Activated naive CD4-positive, alpha-beta T cell treated with anti-CD3 and anti-CD28 coated beads for 36 hours (primary cell): ENCODE measurements at regions of chr15 and their contacts with region 1.

Region 1: GRCh38 chr15:52558196-52558595 is 10.6 kb downstream of the ARPP19 start:
- DNase-seq: peak; percentile 82
- H3K4me3 Mint-ChIP-seq: peak overlapping the region; percentile 24
- H3K27ac Mint-ChIP-seq: peak overlapping the region; percentile 89
- H3K4me1 Mint-ChIP-seq: peaks cover 55% of the 10 kb centered on the region
- H3K27me3 Mint-ChIP-seq: no peaks in the 10 kb centered on the region

Region 2: DNA sequence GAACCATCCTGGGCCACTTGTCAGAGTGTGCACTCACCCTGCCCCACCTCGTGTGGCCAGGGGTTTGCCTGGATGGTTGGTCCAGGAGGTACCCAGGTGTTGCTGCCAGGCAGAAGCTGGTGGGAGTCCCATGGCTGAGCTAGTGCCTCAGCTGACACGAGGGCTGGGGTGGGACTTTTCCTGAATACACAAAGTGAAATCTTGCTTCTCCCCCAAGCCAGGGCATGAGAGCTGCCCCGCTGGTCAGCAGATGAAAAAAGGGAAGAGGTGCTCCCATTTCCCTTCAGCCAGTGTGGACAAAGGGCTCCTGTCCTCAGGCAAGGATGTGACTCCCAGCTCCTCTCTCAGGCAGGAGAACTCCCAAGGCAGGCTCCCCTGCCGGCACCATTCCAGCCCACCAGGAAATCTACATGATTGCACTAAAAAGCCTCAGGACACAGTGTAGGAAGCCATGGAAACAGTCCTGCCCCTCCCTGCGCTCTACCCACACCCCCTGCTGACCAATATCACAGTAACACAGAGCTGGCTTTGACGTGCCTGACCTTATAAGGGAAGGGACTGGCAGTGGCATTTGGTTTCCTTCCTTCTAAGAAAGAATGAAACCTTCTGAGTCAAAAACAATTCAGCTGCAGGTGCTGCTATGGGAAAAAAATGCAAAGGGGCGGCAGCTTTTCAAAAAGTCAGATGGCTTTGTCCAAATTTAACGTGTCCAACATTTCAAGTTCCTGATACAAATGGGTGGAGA is 296.5 kb before region 1 on chr15:
- CTCF ChIA-PET with region 1: interaction called, 4 read pairs
- intact Hi-C with region 1: loop called (anchors 2 kb)
- DNase-seq: peak; percentile 89
- H3K4me3 Mint-ChIP-seq: peak overlapping the region; percentile 13
- H3K27ac Mint-ChIP-seq: peak overlapping the region; percentile 74
- H3K4me1 Mint-ChIP-seq: peaks cover 34% of the 10 kb centered on the region
- H3K27me3 Mint-ChIP-seq: no peaks in the 10 kb centered on the region

Region 3: GRCh38 chr15:52481915-52482314 is 76.3 kb before region 1 on chr15:
- CTCF ChIA-PET with region 1: no interaction called
- intact Hi-C with region 1: loop called (anchors 2 kb)
- DNase-seq: peak; percentile 55
- H3K4me3 Mint-ChIP-seq: no peak overlapping the region
- H3K27ac Mint-ChIP-seq: no peak overlapping the region
- H3K4me1 Mint-ChIP-seq: peaks cover 47% of the 10 kb centered on the region
- H3K27me3 Mint-ChIP-seq: no peaks in the 10 kb centered on the region

Region 4: GRCh38 chr15:52528991-52529926 is 28.9 kb before region 1 on chr15:
- CTCF ChIA-PET with region 1: no interaction called
- intact Hi-C with region 1: loop called (anchors 1 kb)
- DNase-seq: peak; percentile 81
- H3K4me3 Mint-ChIP-seq: peak overlapping the region; percentile 74
- H3K27ac Mint-ChIP-seq: peak overlapping the region; percentile 47
- H3K4me1 Mint-ChIP-seq: peaks cover 13% of the 10 kb centered on the region
- H3K27me3 Mint-ChIP-seq: no peaks in the 10 kb centered on the region

Region 5: GRCh38 chr15:52658955-52659354 is 100.8 kb after region 1 on chr15:
- CTCF ChIA-PET with region 1: no interaction called
- intact Hi-C with region 1: loop called (anchors 1 kb)
- DNase-seq: peak; percentile 53
- H3K4me3 Mint-ChIP-seq: no peak overlapping the region
- H3K27ac Mint-ChIP-seq: no peak overlapping the region
- H3K4me1 Mint-ChIP-seq: peaks cover 24% of the 10 kb centered on the region
- H3K27me3 Mint-ChIP-seq: no peaks in the 10 kb centered on the region

Region 6: GRCh38 chr15:52730173-52730572 is 172.0 kb after region 1 on chr15:
- CTCF ChIA-PET with region 1: no interaction called
- intact Hi-C with region 1: loop called (anchors 1 kb)
- DNase-seq: peak; percentile 73
- H3K4me3 Mint-ChIP-seq: no peak overlapping the region
- H3K27ac Mint-ChIP-seq: peak overlapping the region; percentile 57
- H3K4me1 Mint-ChIP-seq: peaks cover 38% of the 10 kb centered on the region
- H3K27me3 Mint-ChIP-seq: no peaks in the 10 kb centered on the region